GM12878 (cell line): ENCODE measurements at regions of chr1 and their contacts with region 1.

Region 1: DNA sequence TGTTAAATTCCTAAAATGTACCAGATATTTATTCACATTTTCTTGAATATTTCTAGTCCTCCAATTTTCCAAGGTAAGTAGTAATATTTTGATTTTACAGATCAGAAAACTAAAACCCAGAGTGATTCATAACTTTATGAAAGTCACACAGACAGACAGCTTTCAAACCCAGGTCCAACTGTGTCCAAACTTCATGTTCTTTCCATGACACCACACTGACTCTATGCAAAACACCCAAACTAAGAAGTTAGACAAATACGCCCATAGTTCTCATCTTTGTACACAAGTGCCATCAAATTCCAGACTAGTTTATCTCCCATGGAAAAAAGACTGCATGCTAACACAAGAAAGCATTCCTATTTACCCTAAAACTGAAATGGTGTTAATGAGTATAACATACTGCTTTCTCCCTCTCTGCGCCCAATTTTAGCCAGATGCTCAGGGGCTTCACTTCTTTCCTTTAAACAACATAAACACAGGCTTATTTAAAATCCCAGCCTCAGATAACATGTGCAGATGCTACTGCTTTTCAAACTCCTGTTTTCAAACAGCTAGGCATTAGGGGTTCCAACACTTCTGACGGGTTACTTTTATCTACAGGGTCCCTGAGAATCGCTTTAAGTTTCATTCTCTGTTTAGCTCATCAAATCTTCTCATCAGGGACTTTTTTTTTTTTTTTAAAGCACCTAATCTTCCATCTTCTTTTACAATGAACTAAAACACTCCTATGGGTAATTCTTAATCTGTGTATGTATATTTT is 44.6 kb downstream of the WASF2 start:
- DNase-seq: no peak
- ATAC-seq: peak; percentile 80
- H3K4me3 ChIP-seq: peak overlapping the region; percentile 36; the same call in 1 of the 2 replicates
- H3K27ac ChIP-seq: peak overlapping the region; percentile 85
- H3K4me1 ChIP-seq: peaks cover 63% of the 10 kb centered on the region
- H3K27me3 ChIP-seq: no peaks in the 10 kb centered on the region
- CTCF ChIP-seq: no peak
- EP300 ChIP-seq: peak in 1 of 2 experiments; percentile 37; a peak in 2 of 4 replicates
- POLR2A ChIP-seq: no peak
- RAD21 ChIP-seq: 0 out of 2 replicates have a peak, but pooled peaks have one; percentile 3

Region 2: GRCh38 chr1:26302733-26303405 is 1142.5 kb before region 1 on chr1:
- CTCF ChIA-PET with region 1: no interaction called
- POLR2A ChIA-PET with region 1: no interaction called
- RAD21 ChIA-PET with region 1: no interaction called
- SMC1A ChIA-PET with region 1: no interaction called
- in situ Hi-C with region 1: no loop called
- intact Hi-C with region 1: no loop called
- DNase-seq: no peak
- ATAC-seq: no peak
- H3K4me3 ChIP-seq: no peak overlapping the region
- H3K27ac ChIP-seq: no peak overlapping the region
- H3K4me1 ChIP-seq: peaks cover 14% of the 10 kb centered on the region
- H3K27me3 ChIP-seq: no peaks in the 10 kb centered on the region
- CTCF ChIP-seq: no peak
- EP300 ChIP-seq: no peak
- POLR2A ChIP-seq: no peak
- RAD21 ChIP-seq: no peak

Region 3: DNA sequence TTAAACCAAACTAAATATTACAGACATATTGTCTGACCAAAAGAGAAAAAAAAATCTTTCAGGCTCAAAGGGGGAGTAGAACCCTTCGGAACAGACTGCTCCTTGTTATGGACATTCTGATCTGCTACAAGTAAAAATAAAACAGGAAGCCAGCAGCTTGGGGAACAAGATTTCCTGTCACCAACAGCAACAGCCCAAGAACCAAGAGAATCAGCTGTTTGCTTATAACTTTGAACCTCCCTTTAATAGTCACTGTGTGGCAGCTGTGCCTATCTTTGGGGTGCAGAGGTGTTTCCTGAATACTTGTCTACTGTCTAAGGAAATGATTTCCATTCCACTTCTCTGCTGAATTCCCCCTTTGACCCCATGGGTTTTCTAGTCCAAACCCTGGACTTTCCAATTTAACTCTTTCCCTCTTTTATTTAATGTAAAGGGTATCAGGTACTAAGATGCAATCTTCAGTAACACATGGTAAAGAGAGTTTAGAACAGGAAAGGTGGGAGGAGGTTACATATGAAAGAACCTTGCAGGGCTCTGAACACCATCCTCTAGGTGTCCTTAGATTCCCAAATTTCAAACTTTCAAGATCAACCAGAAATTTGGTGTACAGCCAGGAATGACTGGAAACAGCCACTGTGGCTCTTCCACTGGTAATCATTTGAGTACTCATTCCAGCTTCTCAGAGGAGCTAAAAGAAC is 14.3 kb before region 1 on chr1:
- CTCF ChIA-PET with region 1: interaction called, 240 read pairs
- POLR2A ChIA-PET with region 1: interaction called, 43 read pairs
- RAD21 ChIA-PET with region 1: interaction called, 31 read pairs
- SMC1A ChIA-PET with region 1: interaction called, 470 read pairs
- in situ Hi-C with region 1: no loop called
- intact Hi-C with region 1: no loop called
- DNase-seq: no peak
- ATAC-seq: peak; percentile 63
- H3K4me3 ChIP-seq: peak overlapping the region; percentile 12; the same call in 1 of the 2 replicates
- H3K27ac ChIP-seq: peak overlapping the region; percentile 59
- H3K4me1 ChIP-seq: peaks cover 76% of the 10 kb centered on the region
- H3K27me3 ChIP-seq: no peaks in the 10 kb centered on the region
- CTCF ChIP-seq: 0 out of 6 replicates have a peak, but pooled peaks of 1 of the 3 experiments have one; percentile 1
- EP300 ChIP-seq: no peak
- POLR2A ChIP-seq: no peak
- RAD21 ChIP-seq: 0 out of 2 replicates have a peak, but pooled peaks have one; percentile 7

Region 4: GRCh38 chr1:27464926-27465647 is 19.7 kb after region 1 on chr1:
- CTCF ChIA-PET with region 1: interaction called, 15 read pairs
- POLR2A ChIA-PET with region 1: interaction called, 13 read pairs
- RAD21 ChIA-PET with region 1: interaction called, 30 read pairs
- SMC1A ChIA-PET with region 1: interaction called, 36 read pairs
- in situ Hi-C with region 1: no loop called
- intact Hi-C with region 1: no loop called
- DNase-seq: no peak
- ATAC-seq: peak; percentile 66
- H3K4me3 ChIP-seq: no peak overlapping the region
- H3K27ac ChIP-seq: peak overlapping the region; percentile 41
- H3K4me1 ChIP-seq: peaks cover 15% of the 10 kb centered on the region
- H3K27me3 ChIP-seq: no peaks in the 10 kb centered on the region
- CTCF ChIP-seq: no peak
- EP300 ChIP-seq: no peak
- POLR2A ChIP-seq: no peak
- RAD21 ChIP-seq: no peak

Region 5: DNA sequence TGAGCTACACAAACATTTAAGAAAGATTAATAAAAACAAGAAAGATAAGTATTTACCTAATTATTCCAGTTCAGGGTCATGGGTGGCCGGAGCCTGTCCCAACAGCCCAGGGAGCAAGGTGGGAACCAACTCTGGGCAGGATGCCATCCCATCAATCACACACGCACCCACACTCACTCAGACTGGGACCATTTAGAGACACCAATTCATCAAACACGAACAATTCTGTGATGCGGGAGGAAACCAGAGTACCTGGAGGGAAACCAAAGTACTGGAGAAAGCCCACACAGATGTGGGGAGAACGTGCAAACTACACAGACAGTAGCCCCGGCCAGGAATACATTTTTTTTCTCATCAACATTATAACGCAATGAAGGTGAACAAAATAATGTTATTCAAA is 28.4 kb after region 1 on chr1:
- CTCF ChIA-PET with region 1: interaction called, 5 read pairs
- POLR2A ChIA-PET with region 1: interaction called, 5 read pairs
- RAD21 ChIA-PET with region 1: interaction called, 30 read pairs
- SMC1A ChIA-PET with region 1: interaction called, 14 read pairs
- in situ Hi-C with region 1: no loop called
- intact Hi-C with region 1: no loop called
- DNase-seq: no peak
- ATAC-seq: peak; percentile 9; the same call in 2 of the 3 replicates
- H3K4me3 ChIP-seq: peak overlapping the region; percentile 24; the same call in 1 of the 2 replicates
- H3K27ac ChIP-seq: peak overlapping the region; percentile 30; the same call in 1 of the 2 replicates
- H3K4me1 ChIP-seq: peaks cover 49% of the 10 kb centered on the region
- H3K27me3 ChIP-seq: no peaks in the 10 kb centered on the region
- CTCF ChIP-seq: no peak
- EP300 ChIP-seq: no peak
- POLR2A ChIP-seq: no peak
- RAD21 ChIP-seq: no peak

Region 6: DNA sequence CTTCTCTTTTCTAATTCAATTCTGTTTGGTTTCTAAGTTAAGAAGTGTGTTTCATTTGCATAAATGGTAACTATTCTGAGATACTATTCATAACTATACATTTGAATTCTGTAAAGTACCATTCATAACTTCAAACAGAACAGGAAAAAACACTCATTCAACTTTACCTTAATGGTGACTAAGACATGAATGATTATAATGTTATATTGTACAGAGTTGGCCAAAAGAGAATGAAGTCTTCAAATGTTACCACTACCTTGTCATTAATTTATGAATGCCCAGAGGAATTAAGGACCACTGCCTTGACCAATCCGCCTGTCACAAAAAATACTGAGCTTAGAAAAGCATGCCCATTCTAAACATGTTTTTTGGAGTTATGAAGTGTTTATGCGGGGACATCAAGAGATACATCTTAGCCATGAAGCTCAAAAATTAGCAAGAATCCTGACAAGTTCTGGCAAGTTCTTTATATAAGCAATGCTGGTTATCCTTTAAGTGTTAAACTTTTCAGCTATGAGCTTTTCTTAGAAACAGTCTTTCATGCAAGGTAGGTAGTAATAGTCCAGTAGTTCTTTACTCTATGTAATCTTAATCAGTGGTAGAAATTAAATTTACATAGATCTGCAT is 36.8 kb after region 1 on chr1:
- CTCF ChIA-PET with region 1: interaction called, 4 read pairs
- POLR2A ChIA-PET with region 1: interaction called, 10 read pairs
- RAD21 ChIA-PET with region 1: interaction called, 42 read pairs
- SMC1A ChIA-PET with region 1: interaction called, 14 read pairs
- in situ Hi-C with region 1: no loop called
- intact Hi-C with region 1: no loop called
- DNase-seq: no peak
- ATAC-seq: peak; percentile 64
- H3K4me3 ChIP-seq: peak overlapping the region; percentile 60
- H3K27ac ChIP-seq: peak overlapping the region; percentile 62
- H3K4me1 ChIP-seq: peaks cover 45% of the 10 kb centered on the region
- H3K27me3 ChIP-seq: no peaks in the 10 kb centered on the region
- CTCF ChIP-seq: no peak
- EP300 ChIP-seq: 0 out of 4 replicates have a peak, but pooled peaks of 1 of the 2 experiments have one; percentile 10
- POLR2A ChIP-seq: no peak
- RAD21 ChIP-seq: no peak

Region 7: GRCh38 chr1:27525296-27526272 is 80.2 kb after region 1 on chr1:
- CTCF ChIA-PET with region 1: no interaction called
- POLR2A ChIA-PET with region 1: interaction called, 5 read pairs
- RAD21 ChIA-PET with region 1: interaction called, 10 read pairs
- SMC1A ChIA-PET with region 1: interaction called, 8 read pairs
- in situ Hi-C with region 1: no loop called
- intact Hi-C with region 1: no loop called
- DNase-seq: peak; percentile 53
- ATAC-seq: peak; percentile 80
- H3K4me3 ChIP-seq: peak overlapping the region; percentile 68
- H3K27ac ChIP-seq: peak overlapping the region; percentile 87
- H3K4me1 ChIP-seq: peaks cover 34% of the 10 kb centered on the region
- H3K27me3 ChIP-seq: no peaks in the 10 kb centered on the region
- CTCF ChIP-seq: no peak
- EP300 ChIP-seq: peak in 1 of 2 experiments; percentile 29; a peak in 1 of 4 replicates
- POLR2A ChIP-seq: no peak
- RAD21 ChIP-seq: no peak; the same call in 1 of the 2 replicates